Lower lobe of right lung (tissue), 2 donors: ENCODE measurements at regions of chr7 and their contacts with region 1.

Region 1: DNA sequence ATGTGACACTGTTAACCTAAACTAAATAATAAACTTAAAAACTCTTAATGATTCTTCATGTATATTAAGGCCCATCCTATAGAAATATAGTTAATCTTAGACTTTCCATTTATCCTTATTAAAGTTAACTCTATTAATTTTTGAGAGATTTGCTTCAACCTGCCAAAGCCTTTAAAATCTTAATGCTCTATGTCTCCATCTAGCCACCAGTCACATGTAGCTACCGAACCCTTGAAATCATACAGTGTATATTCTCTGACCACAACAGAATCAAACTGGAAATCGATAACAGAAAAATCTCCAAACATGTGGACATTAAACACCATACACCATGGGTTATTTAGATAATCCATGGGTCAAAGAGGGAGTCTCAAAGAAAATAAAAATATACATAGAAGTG is 51.9 kb downstream of the ASZ1 start:
- DNase-seq: no peak
- ATAC-seq: no peak
- H3K4me3 ChIP-seq: no peak overlapping the region
- H3K27ac ChIP-seq: no peak overlapping the region
- H3K4me1 ChIP-seq: no peaks in the 10 kb centered on the region
- H3K27me3 ChIP-seq: no peaks in the 10 kb centered on the region
- CTCF ChIP-seq: no peak

Region 2: GRCh38 chr7:117212969-117213877 is 162.2 kb before region 1 on chr7:
- intact Hi-C with region 1: loop called (anchors 10 kb)
- DNase-seq: peak; percentile 54
- ATAC-seq: peak; percentile 75 to 79
- H3K4me3 ChIP-seq: no peak overlapping the region
- H3K27ac ChIP-seq: no peak overlapping the region
- H3K4me1 ChIP-seq: no peaks in the 10 kb centered on the region
- H3K27me3 ChIP-seq: no peaks in the 10 kb centered on the region
- CTCF ChIP-seq: peak; percentile 89

Region 3: DNA sequence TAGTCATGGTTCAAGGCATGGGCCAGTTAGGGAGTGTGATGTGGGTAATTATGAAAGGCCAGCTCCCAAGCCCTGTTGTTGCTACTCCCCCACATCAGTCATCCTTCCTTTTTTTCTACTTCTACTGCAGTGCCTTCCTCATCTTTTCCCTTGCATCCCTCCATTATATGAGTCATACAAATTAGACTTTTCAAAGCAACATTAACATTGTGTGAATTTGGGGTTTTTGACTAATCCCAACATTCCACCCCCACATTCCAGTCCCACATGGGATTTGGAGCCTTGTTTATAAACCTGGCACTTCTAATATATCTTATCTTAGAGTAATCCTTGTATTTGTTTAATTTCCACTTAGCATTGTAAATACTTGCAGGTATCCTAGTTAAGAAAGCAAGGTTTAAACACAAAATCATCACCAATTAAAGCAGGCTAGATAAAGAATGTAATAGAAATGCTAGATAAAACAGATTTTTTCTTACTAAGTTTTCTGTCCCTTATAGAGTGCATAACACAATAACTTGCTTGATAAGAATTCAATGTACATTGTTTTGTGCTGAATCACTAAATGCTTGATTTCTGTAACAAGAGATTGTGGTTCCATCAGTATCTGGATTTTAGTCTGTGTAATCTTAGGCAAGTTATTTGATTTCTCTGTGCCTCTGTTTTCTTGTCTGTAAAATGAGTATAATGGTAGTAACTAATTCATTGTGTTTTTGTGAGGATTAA is 270.2 kb after region 1 on chr7:
- intact Hi-C with region 1: no loop called
- DNase-seq: no peak
- ATAC-seq: peak in 1 of 2 donors; percentile 42
- H3K4me3 ChIP-seq: no peak overlapping the region
- H3K27ac ChIP-seq: no peak overlapping the region
- H3K4me1 ChIP-seq: no peaks in the 10 kb centered on the region
- H3K27me3 ChIP-seq: no peaks in the 10 kb centered on the region
- CTCF ChIP-seq: no peak